H1 (cell line): ENCODE measurements at regions of chr10 and their contacts with region 1.

Region 1: GRCh38 chr10:113165673-113166072 is 215.6 kb downstream of the TCF7L2 start:
- DNase-seq: no peak
- H3K4me3 ChIP-seq: no peak overlapping the region
- H3K27ac ChIP-seq: no peak overlapping the region
- H3K4me1 ChIP-seq: peaks cover 11 to 40% (median 25%) of the 10 kb centered on the region in 4 experiments
- H3K27me3 ChIP-seq: no peaks in the 10 kb centered on the region
- CTCF ChIP-seq: no peak
- EP300 ChIP-seq: no peak
- POLR2A ChIP-seq: no peak
- RAD21 ChIP-seq: no peak

Region 2: DNA sequence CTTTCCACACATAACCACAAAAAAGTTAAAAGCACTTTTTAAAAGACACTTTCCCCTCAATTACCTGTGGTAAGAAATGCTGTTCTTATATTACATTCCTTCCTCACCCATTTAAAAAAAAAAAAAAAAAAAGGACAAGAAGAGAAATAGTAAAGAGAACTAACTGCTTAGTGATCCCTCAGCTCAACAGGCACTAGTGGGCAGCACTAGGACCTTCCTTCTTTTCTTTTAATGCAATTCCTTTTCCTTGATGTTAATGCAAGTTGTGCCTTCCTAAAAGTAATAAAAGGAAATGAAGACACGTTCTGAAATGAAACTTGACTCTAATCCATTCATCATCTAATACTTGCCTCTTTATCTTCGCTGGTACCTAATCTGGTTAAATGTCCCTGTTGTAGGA is 26.0 kb before region 1 on chr10:
- CTCF ChIA-PET with region 1: interaction called, 10 read pairs
- POLR2A ChIA-PET with region 1: no interaction called
- DNase-seq: no peak
- H3K4me3 ChIP-seq: no peak overlapping the region
- H3K27ac ChIP-seq: no peak overlapping the region
- H3K4me1 ChIP-seq: peaks cover 16 to 39% (median 36%) of the 10 kb centered on the region in 4 experiments
- H3K27me3 ChIP-seq: no peaks in the 10 kb centered on the region
- CTCF ChIP-seq: peak in 1 of 3 experiments; percentile 22; a peak in 2 of 4 replicates
- EP300 ChIP-seq: no peak
- POLR2A ChIP-seq: no peak
- RAD21 ChIP-seq: no peak

Region 3: GRCh38 chr10:113153493-113154102 is 12.1 kb before region 1 on chr10:
- CTCF ChIA-PET with region 1: interaction called, 10 read pairs
- POLR2A ChIA-PET with region 1: no interaction called
- DNase-seq: no peak
- H3K4me3 ChIP-seq: no peak overlapping the region
- H3K27ac ChIP-seq: no peak overlapping the region
- H3K4me1 ChIP-seq: no peaks in the 10 kb centered on the region; a peak in 2 of 7 replicates
- H3K27me3 ChIP-seq: no peaks in the 10 kb centered on the region
- CTCF ChIP-seq: no peak
- EP300 ChIP-seq: no peak
- POLR2A ChIP-seq: no peak
- RAD21 ChIP-seq: no peak

Region 4: DNA sequence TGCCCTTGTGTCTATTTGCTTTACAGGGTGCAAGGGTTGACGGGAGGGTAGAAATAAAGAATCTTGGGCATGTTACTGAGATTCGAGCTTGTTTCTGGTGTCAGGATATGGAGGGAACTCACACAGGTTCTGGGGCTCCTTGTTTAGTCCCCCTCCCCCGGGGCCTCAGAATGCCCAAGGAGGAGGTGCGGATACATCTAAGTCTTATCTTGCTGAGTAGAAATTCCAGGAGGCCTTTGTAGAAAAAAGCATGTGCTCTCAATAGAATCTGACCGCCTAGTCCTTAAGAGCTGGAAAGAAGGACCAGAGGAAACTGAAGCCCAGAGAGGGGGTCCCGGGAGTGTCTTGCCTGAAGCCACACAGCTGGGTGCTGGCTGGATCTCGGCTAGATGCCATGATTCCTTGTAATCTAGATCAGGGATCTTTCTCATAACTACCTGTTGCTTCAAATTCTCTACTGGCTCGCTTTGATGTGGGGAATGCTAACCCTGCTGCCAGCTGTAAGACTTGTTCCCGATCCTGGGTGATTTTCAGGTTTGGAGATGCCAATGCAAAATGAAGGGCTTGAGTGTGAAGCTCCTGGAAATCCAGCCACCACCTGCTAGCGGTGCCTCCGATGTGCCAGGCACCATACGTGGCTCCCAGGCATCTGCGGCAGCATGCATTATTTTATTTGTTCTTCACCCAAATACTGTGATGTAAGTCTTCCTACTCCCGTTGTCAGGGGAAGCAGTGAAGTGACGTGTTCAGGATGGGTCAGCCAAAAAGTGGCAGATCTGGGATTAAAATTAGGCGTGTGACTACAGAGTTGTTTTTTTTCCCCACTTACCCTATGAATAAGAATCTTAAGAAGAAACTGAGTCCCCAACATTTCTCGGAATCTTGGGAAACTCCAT is 10.3 kb after region 1 on chr10:
- CTCF ChIA-PET with region 1: interaction called, 15 read pairs
- POLR2A ChIA-PET with region 1: interaction called, 3 read pairs
- DNase-seq: peak in 1 of 2 experiments; percentile 44
- H3K4me3 ChIP-seq: no peak overlapping the region
- H3K27ac ChIP-seq: no peak overlapping the region
- H3K4me1 ChIP-seq: peaks cover 2 to 8% (median 4%) of the 10 kb centered on the region in 4 experiments; a peak in 6 of 7 replicates
- H3K27me3 ChIP-seq: no peaks in the 10 kb centered on the region
- CTCF ChIP-seq: no peak
- EP300 ChIP-seq: no peak
- POLR2A ChIP-seq: no peak
- RAD21 ChIP-seq: no peak

Region 5: DNA sequence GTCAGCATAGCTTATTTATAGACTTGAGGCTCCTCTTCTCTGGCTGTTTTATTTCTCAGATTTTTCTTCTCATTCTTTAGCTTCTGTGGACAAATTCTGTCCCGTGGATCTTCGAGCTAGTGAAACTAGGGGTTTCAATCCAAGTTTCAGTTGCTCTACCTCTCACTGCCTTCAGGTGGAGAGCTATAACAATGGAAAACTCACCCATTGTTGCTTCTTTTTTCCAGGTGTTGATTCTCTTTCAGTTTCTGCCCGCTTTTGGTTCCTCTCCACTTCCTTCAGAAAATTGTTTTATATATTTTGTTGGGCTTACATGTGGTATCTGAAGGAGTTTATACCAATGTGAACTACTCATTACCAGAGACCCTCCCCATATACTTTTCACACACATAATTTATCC is 50.4 kb after region 1 on chr10:
- CTCF ChIA-PET with region 1: interaction called, 11 read pairs
- POLR2A ChIA-PET with region 1: no interaction called
- DNase-seq: no peak
- H3K4me3 ChIP-seq: no peak overlapping the region
- H3K27ac ChIP-seq: no peak overlapping the region
- H3K4me1 ChIP-seq: no peaks in the 10 kb centered on the region; a peak in 1 of 7 replicates
- H3K27me3 ChIP-seq: no peaks in the 10 kb centered on the region
- CTCF ChIP-seq: peak in 2 of 3 experiments; percentile 42 to 65; a peak in 3 of 4 replicates
- EP300 ChIP-seq: no peak
- POLR2A ChIP-seq: no peak
- RAD21 ChIP-seq: peak; percentile 75 to 80